Right ventricle myocardium superior (tissue), 1 donor: ENCODE measurements at regions of chr7 and their contacts with region 1.

Region 1: DNA sequence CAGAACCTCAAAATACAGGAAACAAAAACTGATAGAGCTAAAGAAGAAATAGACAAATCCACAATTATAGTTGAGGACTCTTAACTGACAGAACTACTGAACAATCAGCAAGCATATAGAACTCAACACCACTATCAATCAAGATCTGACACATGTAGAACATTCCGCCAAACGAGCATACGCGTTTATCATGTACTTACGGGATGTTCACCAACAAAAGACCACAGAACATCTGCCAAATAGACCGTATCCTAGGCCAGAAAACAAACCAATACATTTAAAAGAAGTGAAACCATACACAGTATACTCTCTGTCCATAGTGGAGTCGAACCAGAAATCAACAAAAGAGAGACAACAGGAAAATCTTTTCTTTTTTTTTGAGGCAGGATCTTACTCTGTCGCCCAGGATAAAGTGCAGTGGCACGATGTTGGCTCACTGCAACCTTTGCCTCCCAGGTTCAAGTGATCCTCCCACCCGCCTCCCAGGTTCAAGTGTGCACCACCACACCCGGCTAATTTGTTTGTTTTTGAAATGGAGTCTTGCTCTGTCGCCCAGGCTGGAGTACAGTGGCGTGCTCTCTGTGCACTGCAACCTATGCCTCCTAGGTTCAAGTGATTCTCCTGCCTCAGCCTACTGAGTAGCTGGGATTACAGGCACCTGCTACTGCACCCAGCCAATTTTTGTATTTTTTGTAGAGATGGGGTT is 5.1 kb downstream of the GNA12 start:
- DNase-seq: no peak
- ATAC-seq: no peak

Region 2: GRCh38 chr7:2732959-2733584 is 106.0 kb before region 1 on chr7:
- intact Hi-C with region 1: loop called (anchors 5 kb)
- DNase-seq: peak; percentile 81
- ATAC-seq: peak; percentile 63